Dorsolateral prefrontal cortex (tissue), 120 donors: ENCODE measurements at regions of chr4 and their contacts with region 1.

Region 1: GRCh38 chr4:156695163-156695562 is 276.4 kb downstream of the PDGFC start:
- DNase-seq: peak in 8 of 10 donors; percentile 9 to 69 (median 56)
- H3K4me3 ChIP-seq: peak overlapping the region in 15 of 59 donors; percentile 2 to 49 (median 19)
- H3K27ac ChIP-seq: peak overlapping the region in 4 of 59 donors; percentile 8 to 34 (median 24)
- H3K27me3 ChIP-seq: no peaks in the 10 kb centered on the region
- CTCF ChIP-seq: no peak

Region 2: GRCh38 chr4:156677131-156677531 is 18.0 kb before region 1 on chr4:
- intact Hi-C with region 1: no loop called
- DNase-seq: no peak
- H3K4me3 ChIP-seq: no peak overlapping the region
- H3K27ac ChIP-seq: no peak overlapping the region
- H3K27me3 ChIP-seq: no peaks in the 10 kb centered on the region
- CTCF ChIP-seq: peak in 5 of 56 donors; percentile 8 to 20 (median 14)

Region 3: DNA sequence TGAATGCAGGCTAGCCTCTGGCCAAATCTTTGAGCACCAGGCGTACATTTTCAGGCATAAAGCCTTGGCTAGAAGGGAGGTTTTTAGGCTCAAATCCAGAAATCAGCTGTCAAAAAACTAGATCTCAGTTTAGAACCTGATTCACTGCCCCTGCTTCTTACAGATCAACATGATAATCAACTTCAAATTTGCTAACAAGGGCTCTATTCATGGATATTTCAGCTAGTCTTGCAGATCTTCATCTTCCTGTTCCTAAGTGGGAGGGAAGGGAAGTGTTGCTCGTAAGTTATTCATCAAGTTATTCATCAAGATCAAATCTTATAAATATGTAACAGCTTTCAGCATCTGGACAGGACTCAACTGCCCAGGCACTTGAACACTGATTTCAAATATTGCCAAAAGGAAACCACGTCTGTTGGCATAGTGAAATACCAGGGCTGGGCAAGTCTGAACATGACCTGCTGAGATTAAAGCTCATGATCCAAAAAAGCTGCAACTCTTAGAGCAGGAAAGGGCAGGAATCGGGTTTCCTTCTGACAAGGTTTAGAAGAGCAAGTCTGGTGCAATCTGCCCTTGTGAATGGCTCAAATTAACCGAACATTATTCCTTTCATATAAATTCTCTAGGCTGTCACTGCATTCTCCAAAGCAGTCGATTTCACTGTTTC is 76.1 kb after region 1 on chr4:
- intact Hi-C with region 1: loop called in 1 of 2 experiments (anchors 2 kb)
- DNase-seq: no peak
- H3K4me3 ChIP-seq: peak overlapping the region in 58 of 59 donors; percentile 11 to 64 (median 42)
- H3K27ac ChIP-seq: peak overlapping the region in 58 of 59 donors; percentile 9 to 88 (median 76)
- H3K27me3 ChIP-seq: no peaks in the 10 kb centered on the region
- CTCF ChIP-seq: no peak